GM10248 (cell line): ENCODE measurements at regions of chr1 and their contacts with region 1.

Region 1: DNA sequence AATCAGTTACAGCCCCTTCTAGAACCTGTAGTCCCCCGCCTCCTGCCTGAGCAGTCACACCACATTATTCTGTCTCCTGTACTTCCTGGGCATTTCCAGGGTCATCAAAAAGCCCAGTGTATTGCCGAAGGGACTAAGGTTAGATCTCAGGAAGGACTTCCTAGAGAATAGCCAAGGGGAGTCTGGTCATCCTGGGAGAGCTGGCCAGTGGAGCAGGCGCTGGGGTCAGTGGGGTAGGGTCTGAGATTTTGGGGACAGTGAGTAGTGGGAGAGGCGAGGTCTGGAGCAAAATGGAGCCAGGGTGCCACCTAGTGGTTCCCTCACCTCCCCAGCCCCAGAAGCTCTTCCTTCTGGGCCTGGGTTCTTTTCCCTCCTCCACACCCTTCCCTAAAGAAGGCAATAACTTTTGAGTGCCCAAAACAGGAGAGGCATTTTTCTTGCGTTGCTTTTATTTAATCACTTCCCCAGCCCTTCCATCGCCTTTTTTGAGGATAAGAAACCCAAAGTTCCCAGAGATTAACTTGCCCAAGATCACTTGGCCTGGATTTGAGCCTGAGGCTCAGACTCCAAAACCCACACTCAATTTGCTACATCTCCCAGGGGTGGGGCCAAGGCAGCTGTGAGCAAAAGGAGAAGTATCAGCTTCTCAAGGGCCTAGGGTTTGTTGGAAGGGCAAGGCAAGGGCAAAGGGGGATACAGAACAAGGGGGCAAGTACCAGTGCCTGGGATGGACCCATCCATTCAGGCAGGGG is 7.3 kb upstream of the PMVK start:
- DNase-seq: peak; percentile 66
- CTCF ChIP-seq: peak; percentile 89

Region 2: DNA sequence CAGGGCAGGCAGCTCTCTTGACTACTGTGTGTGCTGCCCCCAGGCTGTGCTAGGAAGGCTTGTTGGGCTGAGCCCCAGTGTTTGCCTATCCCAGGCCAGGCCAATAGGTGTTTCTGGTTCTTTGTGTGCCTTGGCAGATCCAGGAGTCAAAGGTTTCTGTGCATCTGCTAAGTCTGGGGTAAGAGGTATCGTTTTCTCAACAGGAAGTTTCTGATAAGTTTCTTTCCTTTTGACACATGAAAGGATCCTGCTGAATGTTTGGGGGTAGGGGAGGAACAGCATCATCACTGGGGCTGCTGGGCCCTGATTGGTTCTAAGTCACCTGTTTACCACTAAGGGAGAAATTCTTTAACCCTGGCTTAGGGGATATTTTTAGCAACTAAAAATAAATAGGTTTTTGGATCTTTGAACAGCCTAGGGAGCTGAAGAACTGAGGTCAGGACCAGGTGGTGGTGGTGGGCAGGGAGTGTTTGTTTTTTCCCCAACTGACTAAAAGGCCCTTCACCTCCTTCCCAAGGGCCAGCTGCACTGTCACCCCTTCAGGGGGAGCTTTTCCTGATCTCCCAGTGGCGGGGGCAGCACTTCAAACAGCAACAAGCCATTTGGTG is 158.8 kb before region 1 on chr1:
- CTCF ChIA-PET with region 1: no interaction called
- POLR2A ChIA-PET with region 1: no interaction called
- DNase-seq: peak; percentile 84
- CTCF ChIP-seq: no peak

Region 3: DNA sequence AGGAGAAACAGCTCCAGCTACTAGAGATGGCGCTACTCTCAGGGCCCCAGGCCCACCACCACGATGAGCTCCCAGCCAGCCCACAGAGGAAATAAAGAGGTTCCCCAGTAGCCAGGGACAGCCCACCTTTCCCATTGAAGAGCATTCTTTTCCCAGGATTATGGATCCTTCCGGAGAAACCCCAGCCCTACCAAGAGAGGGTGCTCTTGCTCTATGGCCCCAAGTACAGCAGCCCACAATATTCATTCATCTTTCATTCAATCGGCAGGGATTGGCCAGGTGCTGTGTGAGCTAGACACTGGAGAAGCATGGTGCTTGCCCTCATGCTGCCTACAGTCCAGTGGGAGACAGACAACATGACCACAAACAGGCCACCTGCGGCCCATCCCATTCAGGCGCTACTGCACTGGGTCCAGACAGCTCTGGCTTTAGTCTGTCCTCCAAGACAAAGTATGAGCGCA is 37.2 kb before region 1 on chr1:
- CTCF ChIA-PET with region 1: no interaction called
- POLR2A ChIA-PET with region 1: no interaction called
- DNase-seq: no peak
- CTCF ChIP-seq: no peak

Region 4: GRCh38 chr1:154974063-154974807 is 30.4 kb after region 1 on chr1 and contains the start of gene CKS1B:
- CTCF ChIA-PET with region 1: interaction called, 10 read pairs
- POLR2A ChIA-PET with region 1: interaction called, 6 read pairs
- DNase-seq: peak; percentile 93
- CTCF ChIP-seq: no peak